ENCODE measurements at regions of chr21 and their contacts with region 1.

Region 1: GRCh38 chr21:22791986-22792560 is 1793.9 kb downstream of the NCAM2 start:
- DNase-seq: peak; percentile 77
- ATAC-seq: peak; percentile 37; the same call in 1 of the 2 replicates
- H3K4me3 ChIP-seq: no peak overlapping the region
- H3K27ac ChIP-seq: no peak overlapping the region
- H3K4me1 ChIP-seq: no peaks in the 10 kb centered on the region
- H3K27me3 ChIP-seq: no peaks in the 10 kb centered on the region
- CTCF ChIP-seq: peak; percentile 84

Region 2: DNA sequence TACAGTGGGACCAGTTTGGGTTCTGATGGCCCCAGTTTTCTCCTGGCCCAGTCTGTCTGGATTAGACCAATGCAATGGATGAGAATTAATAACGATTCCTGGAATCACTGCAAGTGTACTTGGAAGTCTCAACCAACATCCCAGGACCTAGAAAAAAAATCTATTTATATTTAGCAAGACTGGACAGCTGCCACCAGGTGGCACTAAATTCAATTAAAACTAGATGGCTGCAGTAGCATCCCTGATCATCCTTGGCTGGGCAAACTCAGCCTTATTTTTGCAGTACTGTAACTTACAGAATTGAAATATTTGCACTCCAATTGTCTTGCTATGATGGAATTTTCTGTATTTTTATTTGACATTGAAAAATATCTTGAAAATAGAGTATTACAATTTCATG is 1628.2 kb before region 1 on chr21:
- CTCF ChIA-PET with region 1: no interaction called
- POLR2A ChIA-PET with region 1: no interaction called
- intact Hi-C with region 1: loop called (anchors 10 kb)
- DNase-seq: peak; percentile 72
- ATAC-seq: peak; percentile 66
- H3K4me3 ChIP-seq: no peak overlapping the region
- H3K27ac ChIP-seq: no peak overlapping the region
- H3K4me1 ChIP-seq: no peaks in the 10 kb centered on the region
- H3K27me3 ChIP-seq: no peaks in the 10 kb centered on the region
- CTCF ChIP-seq: peak; percentile 76

Region 3: DNA sequence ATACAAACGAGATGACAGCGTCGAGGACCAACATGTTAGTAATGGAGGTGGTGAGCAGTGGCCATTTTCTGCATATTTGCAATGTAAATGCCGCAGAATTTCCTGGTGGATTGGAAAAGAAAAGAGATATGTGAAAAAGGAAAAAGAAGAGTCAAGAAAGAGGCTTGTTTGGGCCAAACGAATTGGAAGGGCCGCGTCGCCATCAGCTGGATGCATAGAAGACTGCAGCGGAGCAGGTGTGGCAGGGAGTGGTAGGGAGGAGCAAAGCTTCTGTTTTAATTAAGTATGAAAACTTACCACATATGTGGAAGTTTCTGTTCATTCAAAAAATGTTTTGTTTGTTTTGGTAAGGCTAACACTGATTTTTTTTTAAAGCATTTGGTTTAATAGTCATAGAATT is 1103.2 kb before region 1 on chr21:
- CTCF ChIA-PET with region 1: no interaction called
- POLR2A ChIA-PET with region 1: no interaction called
- intact Hi-C with region 1: loop called (anchors 5 kb)
- DNase-seq: peak; percentile 46
- ATAC-seq: peak; percentile 75
- H3K4me3 ChIP-seq: no peak overlapping the region
- H3K27ac ChIP-seq: no peak overlapping the region
- H3K4me1 ChIP-seq: no peaks in the 10 kb centered on the region
- H3K27me3 ChIP-seq: no peaks in the 10 kb centered on the region
- CTCF ChIP-seq: peak; percentile 67

Region 4: GRCh38 chr21:22575165-22575584 is 216.9 kb before region 1 on chr21:
- CTCF ChIA-PET with region 1: no interaction called
- POLR2A ChIA-PET with region 1: no interaction called
- intact Hi-C with region 1: loop called (anchors 2 kb)
- DNase-seq: peak; percentile 47
- ATAC-seq: peak; percentile 85
- H3K4me3 ChIP-seq: peak overlapping the region; percentile 43
- H3K27ac ChIP-seq: no peak overlapping the region
- H3K4me1 ChIP-seq: no peaks in the 10 kb centered on the region
- H3K27me3 ChIP-seq: no peaks in the 10 kb centered on the region
- CTCF ChIP-seq: peak; percentile 75

Region 5: GRCh38 chr21:23162198-23162946 is 370.3 kb after region 1 on chr21:
- CTCF ChIA-PET with region 1: no interaction called
- POLR2A ChIA-PET with region 1: no interaction called
- intact Hi-C with region 1: loop called (anchors 5 kb)
- DNase-seq: peak; percentile 82
- ATAC-seq: peak; percentile 99
- H3K4me3 ChIP-seq: peak overlapping the region; percentile 7; the same call in 1 of the 2 replicates
- H3K27ac ChIP-seq: peak overlapping the region; percentile 94
- H3K4me1 ChIP-seq: peaks cover 22% of the 10 kb centered on the region
- H3K27me3 ChIP-seq: no peaks in the 10 kb centered on the region
- CTCF ChIP-seq: no peak